ENCODE measurements at regions of chr7 and their contacts with region 1.

Region 1: DNA sequence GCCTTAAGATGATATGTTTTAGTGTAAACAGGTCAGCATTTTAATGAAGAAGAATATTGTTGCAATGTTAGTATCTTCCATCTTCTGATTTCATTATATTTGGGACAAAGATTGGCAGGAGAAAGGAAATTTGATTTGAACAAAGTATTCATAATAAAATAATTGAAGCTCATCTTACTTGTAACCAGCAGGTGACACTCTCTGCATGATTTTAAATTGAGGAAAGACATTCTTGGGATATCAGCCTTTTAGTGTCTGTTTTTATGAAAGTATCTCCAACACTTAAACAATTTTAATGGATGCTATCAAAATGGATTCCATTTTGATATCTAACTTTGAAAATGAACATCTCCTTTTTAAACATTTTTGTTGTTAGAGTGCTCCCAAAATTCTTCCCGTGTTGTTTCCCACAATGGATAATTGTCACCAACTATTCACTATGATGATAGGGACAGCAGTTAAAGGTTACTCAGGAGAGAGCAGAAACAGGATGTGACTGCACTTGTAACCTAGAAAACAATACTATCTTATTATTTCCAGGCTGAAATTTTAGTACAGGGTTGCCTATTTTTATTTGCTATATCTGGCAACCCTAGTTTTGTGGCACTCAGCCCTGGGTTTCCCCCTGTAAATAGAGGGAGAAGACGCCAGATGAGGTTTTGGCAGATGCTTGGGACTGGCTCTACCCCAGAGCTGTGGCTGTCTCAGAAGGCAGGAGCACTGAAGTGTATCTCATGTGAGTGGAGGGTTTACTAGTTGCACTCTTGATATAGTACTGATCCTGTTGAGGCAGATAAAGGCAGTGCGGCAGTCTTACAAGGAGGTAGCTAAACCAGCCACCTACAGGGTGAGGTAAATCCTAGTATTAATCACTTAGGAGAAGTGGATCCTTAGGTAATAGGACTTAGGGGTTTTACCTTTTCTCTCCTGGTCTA is 31.0 kb upstream of the ABCB4 start:
- DNase-seq: peak; percentile 16
- ATAC-seq: no peak; the same call in 1 of the 2 replicates
- H3K4me3 ChIP-seq: no peak overlapping the region
- H3K27ac ChIP-seq: no peak overlapping the region
- H3K4me1 ChIP-seq: 0 out of 2 replicates have a peak, but pooled peaks cover 8% of the 10 kb centered on the region
- H3K27me3 ChIP-seq: no peaks in the 10 kb centered on the region
- CTCF ChIP-seq: peak; percentile 60

Region 2: GRCh38 chr7:87416682-87417587 is 89.6 kb before region 1 on chr7:
- CTCF ChIA-PET with region 1: no interaction called
- POLR2A ChIA-PET with region 1: no interaction called
- intact Hi-C with region 1: loop called (anchors 5 kb)
- DNase-seq: peak; percentile 85
- ATAC-seq: 0 out of 2 replicates have a peak, but pooled peaks have one; percentile 11
- H3K4me3 ChIP-seq: no peak overlapping the region
- H3K27ac ChIP-seq: no peak overlapping the region
- H3K4me1 ChIP-seq: peaks cover 25% of the 10 kb centered on the region
- H3K27me3 ChIP-seq: 0 out of 2 replicates have a peak, but pooled peaks cover 7% of the 10 kb centered on the region
- CTCF ChIP-seq: peak; percentile 87

Region 3: DNA sequence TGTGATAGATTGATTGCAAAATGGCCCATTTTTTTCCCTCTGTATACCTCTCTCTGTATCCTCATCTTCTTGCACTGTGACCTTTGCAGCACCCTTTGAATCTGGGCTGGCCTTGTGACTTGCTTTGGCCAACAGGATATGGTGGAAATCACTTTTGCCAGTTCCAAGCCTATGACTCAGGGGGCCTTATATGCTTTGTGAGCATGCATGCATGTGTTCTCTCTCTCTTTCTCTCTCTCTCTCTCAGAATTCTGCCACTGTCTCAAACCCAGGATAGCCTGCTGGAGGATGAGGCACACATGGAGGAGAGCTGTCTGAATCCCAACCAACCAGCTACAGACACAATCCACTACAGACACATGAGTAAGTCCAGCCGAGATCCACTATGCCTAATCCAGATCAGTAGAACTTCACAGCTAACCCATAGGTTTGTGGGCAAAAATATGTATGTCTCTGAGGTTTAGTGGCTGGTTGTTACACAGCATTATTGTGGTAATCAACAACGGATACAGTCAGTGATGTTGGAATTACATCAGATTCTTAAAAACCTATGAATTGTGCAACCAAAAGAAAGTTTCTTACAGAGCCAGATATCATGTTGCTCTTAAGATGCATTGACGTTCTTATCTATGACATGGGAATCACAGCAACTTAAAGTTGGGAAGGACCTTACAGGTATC is 10.8 kb after region 1 on chr7:
- CTCF ChIA-PET with region 1: no interaction called
- POLR2A ChIA-PET with region 1: no interaction called
- intact Hi-C with region 1: no loop called
- DNase-seq: no peak
- ATAC-seq: no peak
- H3K4me3 ChIP-seq: no peak overlapping the region
- H3K27ac ChIP-seq: no peak overlapping the region
- H3K4me1 ChIP-seq: no peaks in the 10 kb centered on the region
- H3K27me3 ChIP-seq: peaks cover 20% of the 10 kb centered on the region; the same call in 1 of the 2 replicates
- CTCF ChIP-seq: no peak

Region 4: DNA sequence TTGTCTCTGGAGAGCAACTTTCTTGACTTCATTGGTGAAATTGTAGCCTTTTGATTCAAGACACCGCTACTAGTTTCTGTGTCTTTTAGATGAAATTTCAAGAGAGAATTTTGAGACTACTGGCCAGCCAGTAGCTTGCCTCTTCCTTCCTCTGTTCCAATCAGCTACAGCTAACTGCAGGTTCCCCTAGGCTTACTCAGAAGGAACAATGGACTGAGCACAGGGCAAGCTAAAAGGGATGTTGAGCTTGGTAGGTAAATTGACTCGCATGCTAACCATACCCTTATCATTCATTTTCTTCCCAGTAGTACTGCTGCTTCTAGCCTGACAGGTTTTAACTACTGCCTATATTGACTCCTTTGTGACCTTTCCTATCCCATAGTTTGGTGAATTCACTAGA is 202.7 kb after region 1 on chr7:
- CTCF ChIA-PET with region 1: no interaction called
- POLR2A ChIA-PET with region 1: no interaction called
- intact Hi-C with region 1: no loop called
- DNase-seq: no peak
- ATAC-seq: no peak
- H3K4me3 ChIP-seq: no peak overlapping the region
- H3K27ac ChIP-seq: no peak overlapping the region
- H3K4me1 ChIP-seq: no peaks in the 10 kb centered on the region
- H3K27me3 ChIP-seq: no peaks in the 10 kb centered on the region
- CTCF ChIP-seq: no peak

Region 5: DNA sequence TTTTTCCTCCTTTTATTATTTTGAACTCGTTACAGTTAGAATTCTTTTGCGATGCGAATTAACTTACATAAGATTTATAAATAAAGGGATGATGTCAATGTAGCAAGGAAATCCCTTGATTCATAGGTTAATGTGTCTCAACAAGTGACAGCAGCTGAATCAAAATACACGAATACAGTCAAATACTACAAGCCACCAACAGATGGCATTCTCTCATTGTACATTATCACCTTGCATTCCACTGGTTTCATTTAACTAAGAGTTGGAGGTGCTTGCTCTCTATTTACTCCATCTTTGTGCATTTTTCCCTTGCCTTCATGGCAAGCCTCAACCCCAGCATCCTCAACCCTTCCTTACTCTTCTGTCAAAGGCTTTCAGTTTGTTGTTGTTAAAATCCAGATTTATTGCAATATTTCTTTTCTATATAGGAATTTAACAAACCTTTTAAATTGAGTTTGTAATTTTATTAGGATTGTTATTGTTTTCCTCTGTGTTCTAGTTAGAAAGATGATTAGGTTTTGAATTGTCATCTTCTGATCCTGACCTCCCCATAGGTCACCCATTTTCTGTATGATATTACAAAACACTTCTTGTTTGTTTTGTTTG is 291.4 kb after region 1 on chr7:
- CTCF ChIA-PET with region 1: no interaction called
- POLR2A ChIA-PET with region 1: no interaction called
- intact Hi-C with region 1: loop called (anchors 5 kb)
- DNase-seq: peak; percentile 68
- ATAC-seq: peak; percentile 96
- H3K4me3 ChIP-seq: no peak overlapping the region
- H3K27ac ChIP-seq: no peak overlapping the region
- H3K4me1 ChIP-seq: no peaks in the 10 kb centered on the region
- H3K27me3 ChIP-seq: no peaks in the 10 kb centered on the region
- CTCF ChIP-seq: peak; percentile 77

Region 6: DNA sequence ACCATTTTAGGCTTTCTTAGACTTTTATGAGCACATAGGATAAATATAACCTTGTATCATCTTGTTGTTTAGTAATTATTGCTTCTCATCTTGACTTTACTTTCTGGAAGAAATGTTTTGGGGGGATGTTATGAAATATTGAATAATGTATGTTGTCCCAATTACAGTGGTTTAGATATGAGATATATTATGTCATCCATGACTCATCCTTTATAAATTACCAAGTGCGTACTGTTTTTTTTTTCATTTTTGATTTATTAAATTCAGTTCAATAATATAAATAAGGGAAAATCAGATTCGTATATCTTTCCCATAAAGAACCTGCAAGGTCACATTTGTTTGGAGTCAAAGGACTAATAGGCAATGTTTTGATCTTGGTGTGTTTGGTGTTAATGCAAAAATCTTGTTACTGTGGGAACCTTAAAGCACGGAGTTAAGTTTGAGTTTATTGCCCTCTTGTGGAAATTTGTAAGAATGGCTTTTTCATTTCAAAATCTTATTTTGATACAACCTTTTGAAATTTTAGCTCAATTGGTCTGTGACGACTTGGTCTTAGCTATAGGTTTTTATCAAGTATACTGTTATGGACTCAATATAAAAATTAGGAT is 604.7 kb after region 1 on chr7:
- CTCF ChIA-PET with region 1: no interaction called
- POLR2A ChIA-PET with region 1: no interaction called
- intact Hi-C with region 1: loop called (anchors 2 kb)
- DNase-seq: peak; percentile 59
- ATAC-seq: peak; percentile 53
- H3K4me3 ChIP-seq: no peak overlapping the region
- H3K27ac ChIP-seq: no peak overlapping the region
- H3K4me1 ChIP-seq: no peaks in the 10 kb centered on the region
- H3K27me3 ChIP-seq: no peaks in the 10 kb centered on the region
- CTCF ChIP-seq: peak; percentile 74

Measured in PC-3 (cell line).